Sigmoid colon (tissue), 7 donors: ENCODE measurements at regions of chr19 and their contacts with region 1.

Region 1: GRCh38 chr19:37334179-37335071 is 36.5 kb upstream of the ZNF527 start:
- DNase-seq: peak; percentile 96
- H3K4me3 ChIP-seq: peak overlapping the region; percentile 61 to 89 (median 72)
- H3K27ac ChIP-seq: peak overlapping the region; percentile 83 to 89 (median 86)
- H3K4me1 ChIP-seq: peaks cover 0 to 34% (median 23%) of the 10 kb centered on the region in 4 donors
- H3K27me3 ChIP-seq: no peaks in the 10 kb centered on the region
- CTCF ChIP-seq: no peak
- EP300 ChIP-seq: no peak
- POLR2A ChIP-seq: peak; percentile 54 to 62

Region 2: GRCh38 chr19:36214386-36215275 is 1119.8 kb before region 1 on chr19 and contains the starts of genes ZNF146 and ZNF565:
- intact Hi-C with region 1: loop called (anchors 10 kb)
- DNase-seq: peak; percentile 99
- H3K4me3 ChIP-seq: peak within 1 kb of the TSS; percentile 67 to 95 (median 84)
- H3K27ac ChIP-seq: peak within 1 kb of the TSS; percentile 92 to 99 (median 96)
- H3K4me1 ChIP-seq: peaks cover 0 to 33% (median 30%) of the 10 kb centered on the region in 4 donors
- H3K27me3 ChIP-seq: no peaks in the 10 kb centered on the region
- CTCF ChIP-seq: peak in 1 of 4 experiments; percentile 24
- EP300 ChIP-seq: no peak
- POLR2A ChIP-seq: peak; percentile 75 to 78
- total RNA-seq, gene ZNF146: 52.1 to 71.7 (median 57.5) TPM
- total RNA-seq, gene ZNF565: 5.3 to 7.5 (median 6.8) TPM

Region 3: DNA sequence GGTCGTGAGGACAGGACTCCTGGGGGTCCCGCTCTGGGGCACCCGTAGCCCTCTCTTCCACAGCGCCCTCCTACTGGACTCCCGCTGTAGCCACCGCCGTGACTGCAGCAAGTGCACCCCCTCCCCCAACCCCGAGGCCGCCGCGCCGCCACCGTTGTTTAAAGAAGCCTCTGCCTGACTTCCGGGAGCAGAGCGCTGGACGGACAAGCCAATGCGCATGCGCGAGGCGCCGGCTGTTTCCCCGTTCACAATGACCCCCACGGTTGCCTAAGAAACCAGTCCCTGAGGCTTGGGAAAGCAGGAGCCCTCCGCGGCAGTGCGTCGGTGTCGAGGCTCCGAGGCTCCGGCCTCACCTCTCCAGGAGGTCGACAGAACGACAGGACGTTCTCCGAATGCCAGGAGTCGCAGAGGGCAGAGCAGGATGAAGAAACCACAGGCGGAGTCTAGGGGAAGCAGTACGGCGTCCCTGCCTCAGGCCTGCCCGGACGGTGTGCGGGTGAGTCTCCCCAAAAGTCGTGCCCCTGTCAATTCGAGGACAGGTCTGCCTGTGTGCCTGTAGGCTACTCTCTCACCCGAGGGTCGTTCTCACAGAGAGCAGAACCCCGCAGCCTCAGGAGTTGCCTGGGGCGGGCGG is 326.7 kb before region 1 on chr19:
- intact Hi-C with region 1: no loop called
- DNase-seq: peak; percentile 70
- H3K4me3 ChIP-seq: peak overlapping the region; percentile 38 to 57 (median 48)
- H3K27ac ChIP-seq: peak overlapping the region; percentile 20 to 50 (median 40)
- H3K4me1 ChIP-seq: peaks cover 0 to 5% (median 0%) of the 10 kb centered on the region in 4 donors
- H3K27me3 ChIP-seq: no peaks in the 10 kb centered on the region
- CTCF ChIP-seq: no peak
- EP300 ChIP-seq: no peak
- POLR2A ChIP-seq: no peak

Region 4: GRCh38 chr19:37313335-37313627 is 21.1 kb before region 1 on chr19:
- intact Hi-C with region 1: loop called (anchors 2 kb)
- DNase-seq: no peak
- H3K4me3 ChIP-seq: peak overlapping the region in 2 of 4 donors; percentile 41 to 45
- H3K27ac ChIP-seq: peak overlapping the region; percentile 73 to 76 (median 74)
- H3K4me1 ChIP-seq: peaks cover 0 to 20% (median 10%) of the 10 kb centered on the region in 4 donors
- H3K27me3 ChIP-seq: no peaks in the 10 kb centered on the region
- CTCF ChIP-seq: no peak
- EP300 ChIP-seq: no peak
- POLR2A ChIP-seq: no peak

Region 5: GRCh38 chr19:37403403-37403802 is 69.0 kb after region 1 on chr19:
- intact Hi-C with region 1: no loop called
- DNase-seq: no peak
- H3K4me3 ChIP-seq: no peak overlapping the region
- H3K27ac ChIP-seq: no peak overlapping the region
- H3K4me1 ChIP-seq: no peaks in the 10 kb centered on the region
- H3K27me3 ChIP-seq: no peaks in the 10 kb centered on the region
- CTCF ChIP-seq: no peak
- EP300 ChIP-seq: no peak
- POLR2A ChIP-seq: no peak